ENCODE measurements at regions of chr13 and their contacts with region 1.

Region 1: DNA sequence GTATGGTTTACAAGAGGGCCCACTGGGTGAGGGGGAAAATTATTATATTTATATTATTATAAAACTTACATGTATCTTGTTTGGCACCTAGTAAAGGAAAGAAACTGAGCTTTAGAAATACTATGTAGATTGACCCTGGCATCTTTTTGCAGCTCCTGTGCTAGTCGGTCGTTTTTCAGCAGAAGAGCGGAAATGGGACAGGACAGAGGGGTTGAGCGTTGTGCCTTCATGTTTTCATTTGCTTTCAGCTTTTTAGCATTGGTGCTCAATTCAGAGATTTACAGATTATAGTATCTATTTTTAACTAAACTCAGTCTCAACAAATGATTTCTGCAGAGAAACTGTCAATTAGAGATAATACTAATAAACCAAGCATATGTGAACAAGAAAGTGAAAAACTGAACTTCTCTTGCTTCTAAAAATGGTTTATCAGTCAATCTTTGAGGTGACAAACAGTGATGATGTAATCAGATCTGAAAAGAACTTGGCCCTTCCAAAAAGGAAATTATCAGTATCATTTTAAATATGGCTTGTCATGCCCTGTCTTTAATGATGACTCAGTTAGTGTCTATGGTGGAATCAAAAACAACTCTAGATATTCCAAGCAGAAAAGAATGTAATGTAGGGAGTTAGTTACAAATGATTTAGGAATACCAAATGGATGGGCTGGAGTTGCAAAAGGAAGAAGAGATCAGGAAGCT is 56.9 kb upstream of the KCTD4 start:
- DNase-seq: no peak
- H3K4me3 ChIP-seq: no peak overlapping the region
- H3K27ac ChIP-seq: no peak overlapping the region
- H3K4me1 ChIP-seq: peaks cover 23% of the 10 kb centered on the region
- H3K27me3 ChIP-seq: no peaks in the 10 kb centered on the region
- CTCF ChIP-seq: no peak

Region 2: DNA sequence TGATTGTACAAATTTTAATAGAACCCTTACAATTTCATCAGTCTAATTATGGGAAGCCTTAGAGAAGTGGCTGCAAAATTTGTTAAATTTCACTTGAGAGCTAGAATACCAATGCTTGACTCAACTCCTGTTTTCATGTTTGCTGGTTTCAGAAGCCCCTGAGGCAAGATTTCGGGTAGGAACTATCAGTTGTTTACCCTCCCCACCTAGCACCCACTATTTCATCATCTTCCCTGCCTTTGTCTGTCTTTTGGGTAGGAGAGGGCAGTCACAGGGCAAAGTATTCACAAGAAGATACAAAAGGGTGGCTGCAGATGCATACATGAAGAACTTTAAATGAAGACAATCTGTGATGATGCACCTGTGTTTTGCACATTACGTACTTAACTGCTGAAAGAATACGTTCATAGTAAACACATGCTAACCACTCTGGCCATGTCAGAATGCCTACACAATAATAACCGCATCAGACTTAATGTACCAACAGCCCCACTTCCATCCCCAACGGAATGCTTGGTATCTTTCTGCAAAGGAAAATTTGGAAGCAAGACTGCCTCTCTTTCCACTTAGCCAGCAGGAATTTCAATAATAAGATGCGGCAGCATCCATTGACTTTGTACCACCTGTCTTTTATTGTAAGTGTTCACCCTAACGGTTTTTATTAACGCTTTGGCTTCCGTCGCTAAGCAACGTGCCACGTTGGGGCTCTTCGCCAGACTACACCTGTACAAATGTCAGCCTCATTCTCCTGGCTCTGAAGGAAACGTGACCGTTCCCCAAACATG is 52.7 kb after region 1 on chr13:
- CTCF ChIA-PET with region 1: no interaction called
- dilution Hi-C with region 1: no loop called
- in situ Hi-C with region 1: no loop called
- intact Hi-C with region 1: no loop called
- DNase-seq: no peak
- H3K4me3 ChIP-seq: no peak overlapping the region
- H3K27ac ChIP-seq: no peak overlapping the region
- H3K4me1 ChIP-seq: peaks cover 16% of the 10 kb centered on the region
- H3K27me3 ChIP-seq: no peaks in the 10 kb centered on the region
- CTCF ChIP-seq: no peak

Region 3: GRCh38 chr13:45456196-45456972 is 198.6 kb after region 1 on chr13:
- CTCF ChIA-PET with region 1: interaction called, 12 read pairs
- dilution Hi-C with region 1: no loop called
- in situ Hi-C with region 1: no loop called
- intact Hi-C with region 1: no loop called
- DNase-seq: peak; percentile 87
- H3K4me3 ChIP-seq: no peak overlapping the region
- H3K27ac ChIP-seq: peak overlapping the region; percentile 93
- H3K4me1 ChIP-seq: peaks cover 20% of the 10 kb centered on the region
- H3K27me3 ChIP-seq: no peaks in the 10 kb centered on the region
- CTCF ChIP-seq: no peak